ENCODE measurements at regions of chr12 and their contacts with region 1.

Region 1: GRCh38 chr12:53159195-53159839 is 21.2 kb upstream of the ZNF740 start:
- DNase-seq: peak; percentile 72 to 90 (median 81)
- ATAC-seq: peak; percentile 39 to 87 (median 84)
- H3K4me3 ChIP-seq: no peak overlapping the region
- H3K27ac ChIP-seq: no peak overlapping the region
- H3K4me1 ChIP-seq: peaks cover 0 to 9% (median 1%) of the 10 kb centered on the region in 12 donors
- H3K27me3 ChIP-seq: no peaks in the 10 kb centered on the region
- CTCF ChIP-seq: peak; percentile 88 to 98 (median 94)
- POLR2A ChIP-seq: no peak

Region 2: GRCh38 chr12:53115112-53115890 is 44.0 kb before region 1 on chr12:
- intact Hi-C with region 1: loop called in 2 of 10 experiments (anchors 5 kb)
- DNase-seq: no peak
- ATAC-seq: peak in 1 of 4 donors; percentile 42
- H3K4me3 ChIP-seq: no peak overlapping the region
- H3K27ac ChIP-seq: peak overlapping the region in 10 of 12 donors; percentile 60 to 97 (median 80)
- H3K4me1 ChIP-seq: peaks cover 0 to 14% (median 7%) of the 10 kb centered on the region in 12 donors
- H3K27me3 ChIP-seq: no peaks in the 10 kb centered on the region
- CTCF ChIP-seq: no peak
- POLR2A ChIP-seq: no peak

Region 3: GRCh38 chr12:53180220-53180930 is 21.1 kb after region 1 on chr12 and contains the starts of genes CSAD and ZNF740:
- intact Hi-C with region 1: loop called in 1 of 10 experiments (anchors 1 kb)
- DNase-seq: peak; percentile 98 to 99 (median 99)
- ATAC-seq: peak; percentile 99
- H3K4me3 ChIP-seq: peak within 1 kb of the TSS; percentile 61 to 92 (median 78)
- H3K27ac ChIP-seq: peak within 1 kb of the TSS; percentile 86 to 98 (median 94)
- H3K4me1 ChIP-seq: peaks cover 13 to 49% (median 35%) of the 10 kb centered on the region in 12 donors
- H3K27me3 ChIP-seq: no peaks in the 10 kb centered on the region
- CTCF ChIP-seq: no peak
- POLR2A ChIP-seq: peak; percentile 32 to 86
- total RNA-seq, gene CSAD: 4.3 to 14.8 (median 8.2) TPM
- total RNA-seq, gene ZNF740: 4.8 to 27.4 (median 18.7) TPM

Region 4: DNA sequence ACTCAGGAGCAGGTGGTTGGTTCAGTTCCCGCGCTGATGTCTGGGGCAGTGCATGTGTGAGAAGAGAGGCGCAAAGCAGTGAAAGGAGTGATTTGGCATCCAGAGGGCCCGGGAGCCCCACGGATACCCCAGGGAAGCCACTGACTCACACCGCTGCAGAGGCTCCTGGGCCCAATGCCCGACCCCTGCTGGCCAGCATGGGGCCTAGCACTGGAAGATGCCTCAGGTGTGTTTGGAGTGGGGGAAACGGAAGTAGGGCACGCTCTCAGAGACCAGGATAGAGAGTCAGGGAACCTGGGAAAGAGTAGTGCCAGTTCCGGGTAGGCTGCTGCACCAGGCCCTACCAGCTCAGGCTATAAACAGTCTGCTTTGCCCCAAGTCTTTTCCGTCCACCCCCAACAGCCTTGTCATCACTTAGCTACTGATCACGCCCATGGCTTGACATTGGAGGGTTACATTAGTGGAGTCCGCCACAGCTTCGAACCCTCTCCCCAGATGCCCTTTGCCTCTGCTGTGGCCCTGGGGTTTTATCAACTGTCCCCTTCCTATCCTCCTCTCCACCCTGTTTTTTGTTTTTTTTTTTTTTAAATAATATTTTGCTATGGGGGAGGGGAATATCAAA is 30.9 kb after region 1 on chr12:
- intact Hi-C with region 1: loop called in 6 of 10 experiments (anchors 2 to 5 kb)
- DNase-seq: peak in 3 of 5 donors; percentile 64 to 76 (median 66)
- ATAC-seq: peak; percentile 52 to 83 (median 76)
- H3K4me3 ChIP-seq: no peak overlapping the region
- H3K27ac ChIP-seq: peak overlapping the region in 3 of 12 donors; percentile 8 to 64 (median 14)
- H3K4me1 ChIP-seq: peaks cover 0 to 8% (median 3%) of the 10 kb centered on the region in 12 donors
- H3K27me3 ChIP-seq: no peaks in the 10 kb centered on the region
- CTCF ChIP-seq: peak; percentile 54 to 81 (median 63)
- POLR2A ChIP-seq: no peak

Region 5: GRCh38 chr12:53198486-53199110 is 39.3 kb after region 1 on chr12:
- intact Hi-C with region 1: loop called (anchors 1 to 5 kb)
- DNase-seq: no peak
- ATAC-seq: no peak
- H3K4me3 ChIP-seq: no peak overlapping the region
- H3K27ac ChIP-seq: peak overlapping the region in 1 of 12 donors; percentile 35
- H3K4me1 ChIP-seq: peaks cover 0 to 36% (median 6%) of the 10 kb centered on the region in 12 donors
- H3K27me3 ChIP-seq: no peaks in the 10 kb centered on the region
- CTCF ChIP-seq: no peak
- POLR2A ChIP-seq: no peak

Region 6: GRCh38 chr12:53287741-53288216 is 128.5 kb after region 1 on chr12:
- intact Hi-C with region 1: loop called in 3 of 10 experiments (anchors 2 to 5 kb)
- DNase-seq: peak; percentile 62 to 83 (median 71)
- ATAC-seq: peak; percentile 62 to 90 (median 84)
- H3K4me3 ChIP-seq: no peak overlapping the region
- H3K27ac ChIP-seq: no peak overlapping the region
- H3K4me1 ChIP-seq: no peaks in the 10 kb centered on the region
- H3K27me3 ChIP-seq: no peaks in the 10 kb centered on the region
- CTCF ChIP-seq: peak; percentile 52 to 81 (median 68)
- POLR2A ChIP-seq: no peak

Measured in heart left ventricle (tissue), 16 donors.